Body of pancreas (tissue), 4 donors: ENCODE measurements at regions of chr3 and their contacts with region 1.

Region 1: GRCh38 chr3:49839193-49839809 is 17.1 kb downstream of the TRAIP start:
- DNase-seq: peak; percentile 80 to 85 (median 82)
- ATAC-seq: peak; percentile 87
- H3K4me3 ChIP-seq: no peak overlapping the region
- H3K27ac ChIP-seq: peak overlapping the region in 1 of 4 donors; percentile 22
- H3K4me1 ChIP-seq: peaks cover 6% of the 10 kb centered on the region
- H3K27me3 ChIP-seq: no peaks in the 10 kb centered on the region
- CTCF ChIP-seq: peak; percentile 87 to 94 (median 91)
- POLR2A ChIP-seq: no peak

Region 2: GRCh38 chr3:49703443-49703927 is 135.8 kb before region 1 on chr3:
- intact Hi-C with region 1: loop called (anchors 10 kb)
- DNase-seq: peak; percentile 69 to 77 (median 74)
- ATAC-seq: peak; percentile 86
- H3K4me3 ChIP-seq: no peak overlapping the region
- H3K27ac ChIP-seq: no peak overlapping the region
- H3K4me1 ChIP-seq: no peaks in the 10 kb centered on the region
- H3K27me3 ChIP-seq: no peaks in the 10 kb centered on the region
- CTCF ChIP-seq: peak; percentile 74 to 85 (median 80)
- POLR2A ChIP-seq: no peak

Region 3: DNA sequence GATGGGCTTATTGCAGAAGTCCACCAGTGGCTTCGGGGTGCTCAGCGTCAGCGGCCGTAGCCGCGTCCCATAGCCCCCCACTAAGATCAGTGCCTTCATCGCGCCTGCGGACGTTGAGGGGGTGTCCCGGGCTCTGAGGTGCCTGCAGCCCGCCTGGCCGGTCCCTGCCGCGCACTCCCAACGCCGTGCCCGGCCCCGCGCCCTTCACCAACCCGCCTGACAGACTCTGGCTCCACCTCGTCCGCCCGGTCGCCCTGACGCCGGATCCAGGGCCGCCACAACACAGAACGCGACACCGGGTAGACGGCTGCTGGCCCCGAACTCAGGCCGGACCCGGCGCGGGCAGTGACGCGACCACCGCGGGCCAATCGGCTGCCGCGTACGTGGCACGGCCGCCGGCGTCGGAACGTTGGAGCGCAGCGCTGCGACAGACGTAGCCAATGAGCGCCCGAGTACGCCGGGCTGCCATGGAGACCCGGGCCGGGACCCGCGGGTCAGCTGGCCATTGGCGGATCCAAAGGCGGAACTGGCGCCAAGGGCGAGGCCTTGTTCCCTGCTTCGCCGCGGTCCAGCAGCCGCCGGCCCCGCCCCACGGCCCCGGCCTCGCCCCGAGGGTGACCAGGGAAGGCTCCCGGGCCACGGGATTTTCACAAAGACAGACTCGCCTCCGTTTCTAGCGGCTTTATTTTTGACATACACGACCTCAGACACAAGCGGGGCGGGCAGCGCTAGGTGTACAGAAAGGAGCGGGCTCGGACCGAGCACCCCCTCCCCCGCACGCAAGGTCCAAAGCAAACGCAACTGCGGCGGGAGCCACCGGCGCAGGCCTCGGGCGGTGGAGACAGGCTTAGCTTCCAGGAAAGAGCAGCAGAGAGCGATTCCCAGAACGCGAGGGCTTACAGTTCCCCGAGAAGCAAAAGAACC is 115.4 kb before region 1 on chr3 and contains the start of gene GMPPB:
- intact Hi-C with region 1: no loop called
- DNase-seq: peak; percentile 98 to 99 (median 98)
- ATAC-seq: peak; percentile 90
- H3K4me3 ChIP-seq: peak within 1 kb of the TSS; percentile 80 to 91
- H3K27ac ChIP-seq: peak within 1 kb of the TSS; percentile 88 to 99 (median 98)
- H3K4me1 ChIP-seq: peaks cover 63% of the 10 kb centered on the region
- H3K27me3 ChIP-seq: no peaks in the 10 kb centered on the region
- CTCF ChIP-seq: no peak
- POLR2A ChIP-seq: peak; percentile 81 to 89 (median 87)
- total RNA-seq, gene GMPPB: 36.3 to 43.8 TPM

Region 4: GRCh38 chr3:49802719-49803464 is 36.4 kb before region 1 on chr3 and contains the start of gene INKA1:
- intact Hi-C with region 1: loop called (anchors 5 kb)
- DNase-seq: peak; percentile 90 to 92 (median 90)
- ATAC-seq: peak; percentile 84
- H3K4me3 ChIP-seq: peak within 1 kb of the TSS; percentile 78 to 86
- H3K27ac ChIP-seq: peak within 1 kb of the TSS; percentile 47 to 75 (median 60)
- H3K4me1 ChIP-seq: peaks cover 49% of the 10 kb centered on the region
- H3K27me3 ChIP-seq: no peaks in the 10 kb centered on the region
- CTCF ChIP-seq: peak; percentile 78 to 95 (median 92)
- POLR2A ChIP-seq: peak in 2 of 3 donors; percentile 33 to 37
- total RNA-seq, gene INKA1: 2.6 TPM in 1 of 2 donors, not detected in the other